MCF 10A (cell line): ENCODE measurements at regions of chr18 and their contacts with region 1.

Region 1: DNA sequence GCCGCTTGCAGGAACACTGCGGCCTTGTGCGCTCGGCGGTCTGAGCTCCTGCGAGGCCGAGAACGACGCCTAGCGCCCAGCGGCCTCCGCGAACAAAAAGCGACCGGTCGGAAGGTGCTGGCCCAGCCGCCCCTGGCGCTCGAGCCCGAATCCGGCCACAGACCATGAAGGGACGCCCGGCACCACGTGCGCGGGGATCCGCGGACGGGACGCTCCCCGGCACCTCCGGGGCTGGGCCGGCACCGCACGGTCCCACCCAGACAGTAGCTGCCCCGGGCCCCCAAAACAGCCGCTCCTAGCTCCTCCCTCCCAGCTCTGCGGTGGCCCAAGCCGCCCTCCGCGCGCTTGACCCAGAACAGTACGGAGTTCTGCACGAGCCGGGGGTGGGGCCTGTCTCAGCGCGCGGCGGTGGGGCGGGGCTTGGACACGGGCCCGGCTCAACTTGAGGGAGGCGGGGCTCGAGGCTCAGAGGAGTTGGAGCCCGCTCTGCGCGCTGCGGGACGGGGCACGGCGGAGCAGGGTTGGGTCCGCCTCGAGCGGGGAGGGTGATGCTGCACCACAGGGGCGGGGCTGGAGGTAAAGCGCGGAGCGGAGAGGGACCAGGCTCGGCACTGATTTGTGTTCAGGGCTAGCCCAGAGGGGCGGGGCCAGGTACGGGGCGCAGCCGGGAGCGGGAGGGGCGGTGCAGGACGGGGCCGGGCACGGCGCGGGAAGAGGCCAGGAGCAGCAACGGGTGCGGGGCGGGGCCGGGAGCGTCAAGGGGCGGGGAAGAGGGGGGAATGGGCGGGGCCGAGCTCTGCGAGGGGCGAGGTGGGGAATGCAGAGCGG is 538 bp upstream of the IMPA2 start:
- DNase-seq: peak; percentile 99
- H3K4me3 Mint-ChIP-seq: peak overlapping the region; percentile 75
- H3K27ac Mint-ChIP-seq: peak overlapping the region; percentile 94
- H3K4me1 Mint-ChIP-seq: peaks cover 10% of the 10 kb centered on the region
- H3K27me3 Mint-ChIP-seq: no peaks in the 10 kb centered on the region
- CTCF ChIP-seq: no peak

Region 2: GRCh38 chr18:11937874-11938478 is 42.8 kb before region 1 on chr18:
- CTCF ChIA-PET with region 1: interaction called, 26 read pairs
- POLR2A ChIA-PET with region 1: interaction called, 30 read pairs
- intact Hi-C with region 1: no loop called
- DNase-seq: peak; percentile 80
- H3K4me3 Mint-ChIP-seq: no peak overlapping the region
- H3K27ac Mint-ChIP-seq: no peak overlapping the region
- H3K4me1 Mint-ChIP-seq: peaks cover 13% of the 10 kb centered on the region
- H3K27me3 Mint-ChIP-seq: no peaks in the 10 kb centered on the region
- CTCF ChIP-seq: peak; percentile 73

Region 3: GRCh38 chr18:11955239-11956029 is 25.3 kb before region 1 on chr18:
- CTCF ChIA-PET with region 1: interaction called, 8 read pairs
- POLR2A ChIA-PET with region 1: interaction called, 70 read pairs
- intact Hi-C with region 1: no loop called
- DNase-seq: peak; percentile 92
- H3K4me3 Mint-ChIP-seq: peak overlapping the region; percentile 11
- H3K27ac Mint-ChIP-seq: peak overlapping the region; percentile 90
- H3K4me1 Mint-ChIP-seq: peaks cover 23% of the 10 kb centered on the region
- H3K27me3 Mint-ChIP-seq: no peaks in the 10 kb centered on the region
- CTCF ChIP-seq: no peak

Region 4: GRCh38 chr18:12005538-12006487 is 25.0 kb after region 1 on chr18:
- CTCF ChIA-PET with region 1: no interaction called
- POLR2A ChIA-PET with region 1: interaction called, 13 read pairs
- intact Hi-C with region 1: no loop called
- DNase-seq: peak; percentile 49
- H3K4me3 Mint-ChIP-seq: no peak overlapping the region
- H3K27ac Mint-ChIP-seq: peak overlapping the region; percentile 43
- H3K4me1 Mint-ChIP-seq: no peaks in the 10 kb centered on the region
- H3K27me3 Mint-ChIP-seq: no peaks in the 10 kb centered on the region
- CTCF ChIP-seq: no peak

Region 5: DNA sequence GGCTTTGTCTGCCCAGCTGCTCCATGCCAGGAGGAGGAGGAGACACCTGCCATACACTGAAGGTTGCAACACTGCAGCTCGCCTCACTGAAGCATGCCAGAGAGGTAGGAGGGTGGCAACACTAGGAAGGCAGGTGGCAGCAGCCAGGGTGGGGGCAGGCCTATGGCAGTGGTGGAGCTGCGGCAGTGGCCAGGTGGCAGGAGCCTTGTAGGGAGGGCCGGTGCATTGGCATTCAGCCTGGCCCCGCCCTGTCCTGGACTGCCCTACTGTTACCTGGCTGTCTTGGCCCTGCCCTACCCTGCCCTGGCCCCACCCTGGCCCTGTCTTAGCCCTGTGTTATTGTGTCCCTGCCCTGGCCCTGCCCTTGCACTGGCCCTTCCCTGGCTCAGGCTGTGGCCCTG is 105.5 kb after region 1 on chr18:
- CTCF ChIA-PET with region 1: no interaction called
- POLR2A ChIA-PET with region 1: no interaction called
- intact Hi-C with region 1: no loop called
- DNase-seq: peak; percentile 79
- H3K4me3 Mint-ChIP-seq: no peak overlapping the region
- H3K27ac Mint-ChIP-seq: no peak overlapping the region
- H3K4me1 Mint-ChIP-seq: peaks cover 20% of the 10 kb centered on the region
- H3K27me3 Mint-ChIP-seq: no peaks in the 10 kb centered on the region
- CTCF ChIP-seq: no peak